PC-9 (cell line): ENCODE measurements at regions of chr7 and their contacts with region 1.

Region 1: GRCh38 chr7:16211402-16211925 is 209.9 kb downstream of the CRPPA start:
- DNase-seq: no peak
- H3K4me3 ChIP-seq: no peak overlapping the region
- H3K27ac ChIP-seq: no peak overlapping the region
- H3K4me1 ChIP-seq: peaks cover 10% of the 10 kb centered on the region; the same call in 1 of the 2 replicates
- H3K27me3 ChIP-seq: no peaks in the 10 kb centered on the region
- CTCF ChIP-seq: no peak

Region 2: GRCh38 chr7:16135658-16136057 is 75.8 kb before region 1 on chr7:
- CTCF ChIA-PET with region 1: no interaction called
- POLR2A ChIA-PET with region 1: no interaction called
- intact Hi-C with region 1: no loop called
- DNase-seq: no peak
- H3K4me3 ChIP-seq: no peak overlapping the region
- H3K27ac ChIP-seq: no peak overlapping the region
- H3K4me1 ChIP-seq: peaks cover 10% of the 10 kb centered on the region
- H3K27me3 ChIP-seq: no peaks in the 10 kb centered on the region
- CTCF ChIP-seq: no peak

Region 3: GRCh38 chr7:16171928-16172327 is 39.5 kb before region 1 on chr7:
- CTCF ChIA-PET with region 1: no interaction called
- POLR2A ChIA-PET with region 1: interaction called, 12 read pairs
- intact Hi-C with region 1: no loop called
- DNase-seq: no peak
- H3K4me3 ChIP-seq: no peak overlapping the region
- H3K27ac ChIP-seq: no peak overlapping the region
- H3K4me1 ChIP-seq: no peaks in the 10 kb centered on the region
- H3K27me3 ChIP-seq: no peaks in the 10 kb centered on the region
- CTCF ChIP-seq: no peak